ENCODE measurements at regions of chr15 and their contacts with region 1.

Region 1: DNA sequence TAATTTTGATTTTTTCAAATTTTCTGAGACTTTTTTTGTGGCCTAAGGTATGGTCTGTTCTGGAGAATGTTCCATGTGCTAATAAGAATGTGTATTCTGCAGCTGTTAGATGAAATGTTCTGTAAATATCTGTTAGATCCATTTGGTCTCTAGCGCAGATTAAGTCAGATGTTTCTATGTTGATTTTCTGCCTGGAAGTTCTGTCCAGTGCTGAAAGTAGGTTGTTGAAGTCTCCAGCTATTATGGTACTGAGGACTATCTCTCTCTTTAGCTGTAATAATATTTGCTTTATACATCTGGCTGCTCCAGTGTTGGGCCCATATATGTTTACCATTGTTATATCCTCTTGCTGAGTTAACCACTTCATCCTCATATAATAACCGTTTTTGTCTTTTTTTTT is 13.1 kb upstream of the TUBGCP5 start:
- DNase-seq: no peak
- H3K4me3 ChIP-seq: no peak overlapping the region
- H3K27ac ChIP-seq: no peak overlapping the region
- H3K4me1 ChIP-seq: no peaks in the 10 kb centered on the region
- H3K27me3 ChIP-seq: peaks cover 3% of the 10 kb centered on the region
- CTCF ChIP-seq: no peak

Region 2: GRCh38 chr15:23039151-23039916 is 13.2 kb before region 1 on chr15 and contains the start of gene TUBGCP5:
- CTCF ChIA-PET with region 1: no interaction called
- POLR2A ChIA-PET with region 1: interaction called, 21 read pairs
- intact Hi-C with region 1: no loop called
- DNase-seq: peak; percentile 99
- H3K4me3 ChIP-seq: peak within 1 kb of the TSS; percentile 80
- H3K27ac ChIP-seq: peak within 1 kb of the TSS; percentile 94
- H3K4me1 ChIP-seq: peaks cover 5% of the 10 kb centered on the region
- H3K27me3 ChIP-seq: no peaks in the 10 kb centered on the region
- CTCF ChIP-seq: peak; percentile 34
- total RNA-seq, gene TUBGCP5: 31.8 and 31.9 TPM in 2 replicates

Region 3: GRCh38 chr15:23069496-23070166 is 17.1 kb after region 1 on chr15:
- CTCF ChIA-PET with region 1: no interaction called
- POLR2A ChIA-PET with region 1: no interaction called
- intact Hi-C with region 1: no loop called
- DNase-seq: no peak
- H3K4me3 ChIP-seq: no peak overlapping the region
- H3K27ac ChIP-seq: no peak overlapping the region
- H3K4me1 ChIP-seq: peaks cover 8% of the 10 kb centered on the region
- H3K27me3 ChIP-seq: peaks cover 6% of the 10 kb centered on the region
- CTCF ChIP-seq: no peak